ENCODE measurements at regions of chr6 and their contacts with region 1.

Region 1: DNA sequence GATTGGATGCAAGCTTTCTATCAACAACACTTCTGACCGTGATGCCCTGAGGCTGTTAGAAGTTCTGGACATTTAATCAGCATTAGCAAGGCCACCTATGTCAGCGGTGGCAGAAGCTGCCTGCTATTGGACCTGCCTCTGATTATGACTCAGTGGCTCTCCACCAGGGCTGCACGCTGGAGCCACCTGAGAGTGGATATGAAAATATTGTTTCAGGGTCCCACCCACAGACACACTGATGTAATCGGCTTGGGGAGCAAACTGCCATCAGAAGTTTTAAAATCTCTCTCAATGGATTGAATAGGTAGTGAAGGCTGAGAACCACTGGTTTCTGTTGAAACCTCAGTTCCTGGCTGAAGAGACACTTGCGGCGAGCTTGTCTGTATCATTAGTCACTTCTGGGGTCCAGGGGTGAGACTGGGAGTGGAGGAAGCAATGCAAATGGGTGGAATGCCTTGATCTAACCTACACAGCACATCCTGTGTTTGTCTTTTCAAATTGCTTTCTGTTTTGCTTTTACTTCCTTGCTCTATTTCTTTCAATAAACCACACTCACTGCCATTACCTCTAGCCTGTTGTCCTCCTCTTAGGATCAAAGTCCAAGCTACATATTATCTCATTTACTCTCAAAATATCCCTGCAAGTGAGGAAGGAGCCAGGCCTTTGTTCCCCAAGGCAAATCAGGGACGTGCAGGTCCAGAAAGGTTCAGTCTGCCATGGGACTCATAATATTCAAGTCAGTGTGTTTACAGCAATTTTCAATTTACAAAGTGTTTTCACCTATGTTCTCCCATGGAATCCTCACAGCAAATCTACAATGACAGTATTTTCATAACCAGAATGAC is 4.2 kb downstream of the CLIC5 start:
- DNase-seq: peak; percentile 63
- H3K4me3 Mint-ChIP-seq: peak overlapping the region; percentile 47
- H3K27ac Mint-ChIP-seq: peak overlapping the region; percentile 74
- H3K4me1 Mint-ChIP-seq: peaks cover 55% of the 10 kb centered on the region
- H3K27me3 Mint-ChIP-seq: peaks cover 11% of the 10 kb centered on the region

Region 2: DNA sequence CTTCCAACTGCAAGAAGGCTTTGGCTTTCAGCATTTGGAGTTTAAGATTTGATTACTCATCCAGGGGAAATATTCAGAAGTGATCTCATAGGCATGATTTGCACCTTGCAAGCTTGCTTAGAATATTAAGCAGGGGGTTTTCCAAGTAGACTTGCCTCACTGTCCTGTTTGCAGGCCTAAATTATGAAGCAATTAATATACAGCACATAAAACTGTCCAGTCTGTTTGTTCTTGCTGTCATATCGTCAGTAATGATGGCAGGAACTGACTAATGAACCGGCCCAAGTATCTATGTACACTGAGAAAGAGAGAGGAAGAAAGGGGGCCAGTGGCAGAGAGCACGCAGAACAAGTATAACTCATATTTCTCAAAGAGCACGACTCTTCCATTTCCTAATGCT is 421.2 kb before region 1 on chr6:
- intact Hi-C with region 1: loop called (anchors 10 kb)
- DNase-seq: no peak
- H3K4me3 Mint-ChIP-seq: no peak overlapping the region
- H3K27ac Mint-ChIP-seq: peak overlapping the region; percentile 74
- H3K4me1 Mint-ChIP-seq: peaks cover 87% of the 10 kb centered on the region
- H3K27me3 Mint-ChIP-seq: no peaks in the 10 kb centered on the region

Region 3: DNA sequence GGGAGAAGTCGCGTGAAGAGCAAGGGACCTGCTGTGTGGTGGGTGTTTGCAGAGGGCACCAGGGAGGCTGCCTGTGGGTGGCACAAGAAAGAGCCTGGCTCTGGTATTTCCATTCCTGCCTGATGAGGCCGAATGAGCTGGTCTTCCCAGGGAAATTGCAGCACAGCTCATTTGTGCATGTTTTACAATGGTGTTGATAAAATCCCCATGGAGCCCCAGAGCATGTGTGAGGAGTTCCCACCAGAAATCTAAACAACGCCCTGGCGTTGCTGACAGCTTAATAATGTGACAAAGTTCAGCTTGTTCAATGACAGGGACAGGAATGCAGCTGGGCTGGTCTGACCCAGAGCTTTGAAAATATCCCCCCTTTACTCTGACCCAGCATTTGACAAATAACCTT is 131.3 kb before region 1 on chr6:
- intact Hi-C with region 1: no loop called
- DNase-seq: no peak
- H3K4me3 Mint-ChIP-seq: no peak overlapping the region
- H3K27ac Mint-ChIP-seq: no peak overlapping the region
- H3K4me1 Mint-ChIP-seq: no peaks in the 10 kb centered on the region
- H3K27me3 Mint-ChIP-seq: peaks cover 4% of the 10 kb centered on the region

Region 4: GRCh38 chr6:45930420-45931040 is 80.9 kb before region 1 on chr6:
- intact Hi-C with region 1: loop called (anchors 1 kb)
- DNase-seq: peak; percentile 31
- H3K4me3 Mint-ChIP-seq: no peak overlapping the region
- H3K27ac Mint-ChIP-seq: no peak overlapping the region
- H3K4me1 Mint-ChIP-seq: peaks cover 10% of the 10 kb centered on the region
- H3K27me3 Mint-ChIP-seq: peaks cover 2% of the 10 kb centered on the region

Region 5: DNA sequence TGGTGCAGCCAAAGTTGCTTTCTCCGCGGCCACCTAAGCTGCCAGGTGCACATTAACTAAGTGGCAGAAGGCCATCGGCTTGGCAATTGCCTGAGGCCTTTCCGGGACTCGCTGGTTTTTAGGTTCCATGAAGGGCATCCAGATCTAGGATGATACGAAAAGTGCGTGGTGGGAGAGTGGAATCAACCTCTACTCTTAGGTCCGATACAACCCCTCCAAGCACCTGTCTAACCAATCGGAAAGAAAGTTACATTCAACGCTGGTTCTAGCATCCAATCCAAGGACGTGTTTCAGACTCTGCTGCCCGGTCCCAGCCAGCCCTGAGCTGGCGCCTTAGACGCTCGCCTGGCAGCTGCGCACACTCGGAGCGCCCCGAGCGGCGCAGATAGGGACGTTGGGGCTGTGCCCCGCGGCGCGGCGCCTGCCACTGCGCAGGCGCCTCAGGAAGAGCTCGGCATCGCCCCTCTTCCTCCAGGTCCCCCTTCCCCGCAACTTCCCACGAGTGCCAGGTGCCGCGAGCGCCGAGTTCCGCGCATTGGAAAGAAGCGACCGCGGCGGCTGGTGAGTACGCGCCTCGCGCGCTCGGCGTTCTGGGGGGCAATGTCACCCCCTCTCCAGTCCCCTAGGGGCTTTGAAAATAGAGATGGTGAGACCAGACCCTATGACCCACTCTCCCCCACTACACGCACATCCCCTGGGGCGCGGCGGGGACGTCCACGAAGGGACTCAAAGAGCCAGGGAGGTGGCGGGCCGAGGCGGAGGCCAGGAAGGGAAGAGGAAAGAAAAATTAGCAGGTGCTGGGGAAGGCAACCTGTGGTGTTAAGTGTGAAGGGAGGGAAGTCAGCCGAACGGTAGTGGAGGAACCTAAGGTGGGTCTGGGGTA is 118.4 kb after region 1 on chr6 and contains the start of gene ENPP4:
- intact Hi-C with region 1: loop called (anchors 1 kb)
- DNase-seq: peak; percentile 92
- H3K4me3 Mint-ChIP-seq: peak within 1 kb of the TSS; percentile 91
- H3K27ac Mint-ChIP-seq: peak within 1 kb of the TSS; percentile 75
- H3K4me1 Mint-ChIP-seq: peaks cover 25% of the 10 kb centered on the region
- H3K27me3 Mint-ChIP-seq: peaks cover 2% of the 10 kb centered on the region
- total RNA-seq, gene ENPP4: 5.9 and 6.1 TPM in 2 replicates